ENCODE measurements at regions of chr17 and their contacts with region 1.

Region 1: GRCh38 chr17:5249615-5250014 is 15.0 kb upstream of the SCIMP start:
- DNase-seq: peak; percentile 61 to 72 (median 64)
- ATAC-seq: peak; percentile 75
- H3K4me3 ChIP-seq: no peak overlapping the region
- H3K27ac ChIP-seq: no peak overlapping the region
- H3K4me1 ChIP-seq: no peaks in the 10 kb centered on the region
- H3K27me3 ChIP-seq: no peaks in the 10 kb centered on the region
- CTCF ChIP-seq: peak; percentile 24 to 82 (median 63)
- POLR2A ChIP-seq: no peak

Region 2: GRCh38 chr17:5438716-5439445 is 189.3 kb after region 1 on chr17 and contains the start of gene C1QBP:
- intact Hi-C with region 1: loop called (anchors 10 kb)
- DNase-seq: peak; percentile 92 to 95 (median 94)
- ATAC-seq: peak; percentile 97
- H3K4me3 ChIP-seq: peak within 1 kb of the TSS; percentile 56 to 83
- H3K27ac ChIP-seq: peak within 1 kb of the TSS in 3 of 4 donors; percentile 58 to 84 (median 76)
- H3K4me1 ChIP-seq: peaks cover 24% of the 10 kb centered on the region
- H3K27me3 ChIP-seq: no peaks in the 10 kb centered on the region
- CTCF ChIP-seq: peak; percentile 99 to 100 (median 99)
- POLR2A ChIP-seq: peak in 2 of 3 donors; percentile 59 to 67
- total RNA-seq, gene C1QBP: 46.5 to 62.3 TPM